Panc1 (cell line): ENCODE measurements at regions of chr9 and their contacts with region 1.

Region 1: DNA sequence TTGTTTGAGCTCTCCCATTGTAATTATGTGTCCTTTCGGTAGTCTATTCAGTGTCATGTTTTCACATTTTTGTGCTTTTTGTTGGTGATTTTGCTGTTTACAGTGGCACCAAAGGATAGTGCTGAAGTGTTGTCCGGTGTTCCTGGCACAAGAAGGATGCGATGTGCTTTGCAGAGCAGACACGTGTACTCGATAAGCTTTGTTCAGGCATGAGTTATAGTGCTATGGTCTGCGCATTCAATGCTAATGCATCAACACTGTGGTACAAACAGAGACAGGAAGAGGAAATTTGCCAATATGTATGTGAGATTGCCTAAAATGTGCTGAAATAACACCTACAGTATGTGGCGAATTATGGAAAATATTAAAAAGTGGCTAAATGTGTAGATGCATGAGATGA is 913.4 kb upstream of the ACO1 start:
- DNase-seq: no peak
- ATAC-seq: no peak
- H3K4me3 ChIP-seq: no peak overlapping the region
- H3K27ac ChIP-seq: no peak overlapping the region
- H3K4me1 ChIP-seq: no peaks in the 10 kb centered on the region
- H3K27me3 ChIP-seq: no peaks in the 10 kb centered on the region
- CTCF ChIP-seq: no peak

Region 2: GRCh38 chr9:30534896-30535295 is 936.1 kb before region 1 on chr9:
- CTCF ChIA-PET with region 1: no interaction called
- POLR2A ChIA-PET with region 1: no interaction called
- in situ Hi-C with region 1: no loop called
- intact Hi-C with region 1: loop called (anchors 5 kb)
- DNase-seq: no peak
- ATAC-seq: no peak
- H3K4me3 ChIP-seq: no peak overlapping the region
- H3K27ac ChIP-seq: no peak overlapping the region
- H3K4me1 ChIP-seq: no peaks in the 10 kb centered on the region
- H3K27me3 ChIP-seq: no peaks in the 10 kb centered on the region
- CTCF ChIP-seq: no peak

Region 3: DNA sequence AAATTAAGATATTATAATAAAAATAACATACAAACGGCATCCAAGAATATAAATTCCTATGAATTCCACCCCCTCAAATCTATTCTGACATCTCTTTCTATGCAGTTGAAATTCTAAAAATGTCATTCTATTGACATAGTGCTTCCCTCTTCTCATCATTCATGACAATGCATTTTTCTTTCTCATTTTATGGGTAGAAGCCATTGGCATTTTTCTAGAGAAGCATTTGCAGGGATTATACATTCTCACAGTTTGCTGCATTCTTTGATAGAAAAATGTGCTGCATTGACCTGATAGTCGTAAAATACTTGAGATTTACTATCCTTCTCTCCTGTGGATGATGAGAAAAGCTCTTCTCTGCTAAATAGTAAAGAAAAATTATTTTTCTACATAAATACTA is 152.5 kb after region 1 on chr9:
- CTCF ChIA-PET with region 1: no interaction called
- POLR2A ChIA-PET with region 1: no interaction called
- in situ Hi-C with region 1: no loop called
- intact Hi-C with region 1: no loop called
- DNase-seq: no peak
- ATAC-seq: no peak
- H3K4me3 ChIP-seq: no peak overlapping the region
- H3K27ac ChIP-seq: no peak overlapping the region
- H3K4me1 ChIP-seq: no peaks in the 10 kb centered on the region
- H3K27me3 ChIP-seq: no peaks in the 10 kb centered on the region
- CTCF ChIP-seq: no peak